Stomach (tissue), 19 donors: ENCODE measurements at regions of chr3 and their contacts with region 1.

Region 1: DNA sequence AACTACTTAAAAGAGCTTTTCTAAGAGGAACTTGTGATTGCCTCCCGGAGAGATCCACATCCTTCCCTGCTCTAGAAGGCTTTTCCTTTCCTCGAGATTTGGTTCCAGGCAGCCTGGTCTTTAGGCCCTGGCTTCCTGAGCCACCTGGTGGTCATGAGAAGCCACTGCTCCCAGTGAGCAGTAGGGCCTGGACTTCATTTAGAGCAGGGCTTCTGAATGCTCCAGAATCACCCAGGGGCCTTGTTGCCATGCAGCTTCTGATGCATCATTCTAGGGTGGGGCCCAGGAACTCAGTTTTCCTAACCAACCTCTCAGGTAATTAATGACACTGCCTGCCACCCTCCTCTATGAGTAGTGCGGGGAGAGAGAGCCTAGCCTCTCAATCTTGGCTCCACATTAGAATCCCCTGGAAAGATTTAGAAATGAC is 29.6 kb downstream of the PSMD6 start:
- DNase-seq: peak; percentile 68 to 90
- H3K4me3 ChIP-seq: no peak overlapping the region
- H3K27ac ChIP-seq: no peak overlapping the region
- H3K4me1 ChIP-seq: peaks cover 0 to 8% (median 0%) of the 10 kb centered on the region in 4 donors
- H3K27me3 ChIP-seq: no peaks in the 10 kb centered on the region
- CTCF ChIP-seq: peak in 6 of 7 experiments; percentile 43 to 97 (median 96)
- EP300 ChIP-seq: no peak
- POLR2A ChIP-seq: no peak

Region 2: DNA sequence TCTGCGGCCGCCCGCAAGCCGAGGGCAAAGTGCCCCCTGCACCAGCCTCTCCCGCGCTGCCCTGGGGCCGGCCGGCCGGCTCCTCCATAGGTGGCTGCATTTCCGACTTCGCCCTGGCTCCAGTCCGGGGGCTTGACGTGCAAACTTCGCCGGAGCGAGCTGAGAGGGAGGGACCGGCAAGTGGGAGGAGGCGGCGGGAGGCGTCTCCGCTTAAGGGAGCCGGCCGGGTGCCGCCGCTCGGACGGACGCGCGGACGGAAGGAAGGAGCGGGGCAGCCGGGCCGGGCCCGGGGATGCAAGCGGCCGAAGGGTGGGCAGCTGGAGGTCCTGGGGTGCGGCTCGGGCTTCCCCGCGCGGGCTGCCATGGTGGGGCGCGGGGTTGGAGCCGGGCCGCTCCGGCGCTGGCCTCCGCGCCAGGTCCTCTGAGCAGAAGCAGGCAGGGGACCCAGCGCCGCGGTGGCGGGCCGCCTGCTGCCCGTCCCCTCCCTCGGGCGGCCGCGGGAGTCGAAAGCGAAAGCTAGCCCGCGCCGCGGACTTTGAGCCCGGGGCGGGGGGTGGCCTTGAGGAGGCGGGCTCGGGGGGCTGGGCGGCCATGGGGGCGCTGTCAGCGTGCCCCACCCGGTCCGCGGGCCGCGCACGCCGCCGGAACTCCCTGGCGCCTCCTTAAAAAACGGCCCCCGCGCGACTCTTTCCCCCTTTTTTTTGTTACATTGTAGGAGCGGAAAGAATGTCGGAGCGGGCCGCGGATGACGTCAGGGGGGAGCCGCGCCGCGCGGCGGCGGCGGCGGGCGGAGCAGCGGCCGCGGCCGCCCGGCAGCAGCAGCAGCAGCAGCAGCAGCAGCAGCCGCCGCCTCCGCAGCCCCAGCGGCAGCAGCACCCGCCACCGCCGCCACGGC is 81.5 kb before region 1 on chr3 and contains the start of gene SCAANT1:
- intact Hi-C with region 1: loop called (anchors 10 kb)
- DNase-seq: peak; percentile 93 to 97
- H3K4me3 ChIP-seq: peak within 1 kb of the TSS; percentile 56 to 93 (median 68)
- H3K27ac ChIP-seq: peak within 1 kb of the TSS; percentile 94 to 100 (median 99)
- H3K4me1 ChIP-seq: peaks cover 16 to 38% (median 36%) of the 10 kb centered on the region in 4 donors
- H3K27me3 ChIP-seq: no peaks in the 10 kb centered on the region
- CTCF ChIP-seq: peak in 1 of 7 experiments; percentile 23
- EP300 ChIP-seq: no peak
- POLR2A ChIP-seq: peak in 1 of 4 donors; percentile 33
- total RNA-seq, gene SCAANT1: not detected

Region 3: GRCh38 chr3:64345371-64345770 is 351.7 kb after region 1 on chr3:
- intact Hi-C with region 1: no loop called
- DNase-seq: peak in 1 of 2 donors; percentile 93
- H3K4me3 ChIP-seq: no peak overlapping the region
- H3K27ac ChIP-seq: peak overlapping the region in 4 of 5 donors; percentile 65 to 79 (median 74)
- H3K4me1 ChIP-seq: peaks cover 10 to 54% (median 34%) of the 10 kb centered on the region in 4 donors
- H3K27me3 ChIP-seq: no peaks in the 10 kb centered on the region
- CTCF ChIP-seq: no peak
- EP300 ChIP-seq: no peak
- POLR2A ChIP-seq: no peak